ENCODE measurements at regions of chr1 and their contacts with region 1.

Region 1: DNA sequence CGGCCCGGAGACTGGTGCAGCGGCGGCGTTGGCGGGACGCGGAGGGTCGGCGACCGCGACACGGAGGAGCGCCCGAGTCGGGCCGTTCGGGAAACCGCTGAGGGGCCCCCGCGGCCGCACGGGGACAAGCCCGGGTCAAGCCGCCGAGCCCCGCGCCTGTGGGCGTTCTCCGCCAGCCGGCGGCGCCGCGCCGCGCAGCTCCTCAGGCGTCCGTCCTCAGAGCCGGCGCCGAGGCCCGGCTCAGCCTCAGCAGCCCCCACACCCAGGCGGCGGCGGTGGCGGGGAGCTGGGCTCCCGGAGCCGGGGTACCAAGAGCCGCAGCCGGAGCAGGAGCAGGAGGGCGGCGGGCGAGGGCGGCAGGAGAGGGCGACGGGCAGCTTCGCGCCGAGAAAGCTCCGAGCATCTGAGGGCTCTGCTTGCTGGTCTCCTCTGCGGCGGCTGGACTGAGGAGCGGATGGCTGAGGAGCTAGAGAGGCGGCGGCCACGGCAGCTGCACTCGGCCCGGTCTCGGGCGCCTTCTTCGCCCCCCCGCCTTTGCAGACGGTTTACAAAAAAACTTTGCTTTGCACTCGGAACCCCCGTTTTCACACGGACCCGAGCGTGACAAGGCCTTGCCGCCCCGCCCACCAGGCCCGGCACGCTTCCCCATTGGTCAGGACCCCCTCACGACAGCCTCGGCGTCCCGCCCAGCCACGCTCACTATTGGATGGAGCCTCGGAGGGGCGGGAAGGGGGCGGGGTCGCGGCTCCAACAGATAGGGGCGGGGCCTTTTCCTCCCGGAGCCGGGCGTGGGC is at the start of gene SLC30A1:
- DNase-seq: peak; percentile 100
- total RNA-seq, gene SLC30A1: 16.3 TPM

Region 2: DNA sequence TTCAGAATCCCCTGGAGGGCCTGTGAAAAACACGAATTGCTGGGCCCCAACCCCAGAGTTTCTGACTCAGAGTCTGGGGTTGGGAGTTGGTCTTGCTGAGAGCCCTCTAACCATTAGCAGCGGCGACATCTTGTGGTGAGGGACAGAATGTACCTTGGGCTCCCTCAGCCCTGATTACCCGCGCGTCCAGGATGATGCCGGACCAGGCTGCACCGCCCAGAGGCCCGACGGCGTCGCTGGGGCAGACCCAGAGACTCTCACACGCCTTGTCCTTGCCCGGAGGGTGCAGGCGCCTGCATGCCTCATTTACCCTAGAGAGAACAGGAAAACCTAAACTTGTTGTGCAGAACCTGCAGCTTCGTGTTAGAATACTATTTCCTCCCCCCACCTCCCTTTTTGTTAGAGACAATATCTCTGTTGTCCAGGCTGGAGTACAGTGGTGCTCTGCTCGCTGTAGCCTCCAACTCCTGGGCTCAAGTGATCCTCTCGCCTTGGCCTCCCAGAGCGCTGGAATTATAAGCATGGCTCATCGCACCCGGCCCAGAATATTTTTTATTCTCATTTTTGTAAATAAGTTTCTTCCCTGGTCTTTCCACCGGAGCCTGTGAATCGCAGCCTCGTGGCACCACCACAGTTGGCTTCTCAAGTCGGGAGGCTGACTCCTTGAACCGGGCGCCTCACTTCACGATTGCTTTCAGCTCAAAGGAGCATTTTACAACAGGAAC is 64.6 kb before region 1 on chr1:
- intact Hi-C with region 1: loop called (anchors 2 kb)
- DNase-seq: peak; percentile 87

Region 3: GRCh38 chr1:211591980-211592493 is 13.2 kb after region 1 on chr1:
- intact Hi-C with region 1: loop called (anchors 2 kb)
- DNase-seq: no peak

Region 4: GRCh38 chr1:211613093-211613947 is 34.5 kb after region 1 on chr1:
- intact Hi-C with region 1: loop called (anchors 5 kb)
- DNase-seq: peak; percentile 93

Region 5: GRCh38 chr1:211630236-211631081 is 51.6 kb after region 1 on chr1:
- intact Hi-C with region 1: loop called (anchors 1 kb)
- DNase-seq: no peak

Region 6: DNA sequence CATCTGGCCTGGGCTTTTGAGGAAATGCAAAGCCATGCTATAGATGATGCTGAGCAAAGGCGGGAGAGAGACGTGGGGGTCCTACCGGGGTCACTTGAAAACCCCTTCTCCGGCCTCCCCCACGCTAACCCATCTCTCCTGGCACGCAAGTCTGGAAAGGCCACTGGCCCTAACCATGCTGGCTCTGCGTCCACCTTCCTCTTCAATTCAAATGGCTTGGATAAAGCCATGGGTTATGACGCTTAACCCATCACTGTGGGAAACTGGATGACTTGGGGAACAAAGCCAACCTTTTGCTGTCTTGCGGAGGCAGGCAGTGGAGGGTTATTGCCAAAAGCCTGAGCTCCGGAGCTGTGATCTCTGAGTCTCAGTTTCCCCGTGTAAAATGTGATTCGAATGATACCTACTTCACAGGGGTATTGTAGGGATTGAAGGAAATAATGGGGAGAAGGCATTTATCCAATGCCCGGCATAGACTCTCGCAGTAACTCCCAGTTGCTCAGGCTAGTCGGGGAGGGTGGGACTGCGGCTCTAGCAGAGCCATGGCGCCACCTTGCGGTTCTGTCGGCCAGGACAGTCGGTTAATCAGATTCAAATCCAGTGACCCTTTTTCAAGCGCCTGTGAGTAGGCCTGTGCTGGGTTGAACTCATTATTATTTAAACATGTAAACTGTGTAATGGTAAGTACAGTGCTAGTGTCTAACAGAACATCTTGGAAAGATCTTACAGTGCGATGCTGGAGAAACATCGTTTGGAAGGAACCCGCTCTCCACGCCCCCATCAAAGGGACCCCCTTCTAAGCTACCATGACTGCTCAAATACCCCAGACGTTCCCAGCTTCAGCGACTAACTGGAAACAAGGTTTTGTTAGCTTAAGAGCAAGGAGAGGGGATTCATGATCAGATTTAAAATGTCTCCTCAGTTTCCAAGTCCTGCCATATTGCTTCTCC is 76.3 kb after region 1 on chr1:
- intact Hi-C with region 1: loop called (anchors 1 kb)
- DNase-seq: peak; percentile 92

Region 7: DNA sequence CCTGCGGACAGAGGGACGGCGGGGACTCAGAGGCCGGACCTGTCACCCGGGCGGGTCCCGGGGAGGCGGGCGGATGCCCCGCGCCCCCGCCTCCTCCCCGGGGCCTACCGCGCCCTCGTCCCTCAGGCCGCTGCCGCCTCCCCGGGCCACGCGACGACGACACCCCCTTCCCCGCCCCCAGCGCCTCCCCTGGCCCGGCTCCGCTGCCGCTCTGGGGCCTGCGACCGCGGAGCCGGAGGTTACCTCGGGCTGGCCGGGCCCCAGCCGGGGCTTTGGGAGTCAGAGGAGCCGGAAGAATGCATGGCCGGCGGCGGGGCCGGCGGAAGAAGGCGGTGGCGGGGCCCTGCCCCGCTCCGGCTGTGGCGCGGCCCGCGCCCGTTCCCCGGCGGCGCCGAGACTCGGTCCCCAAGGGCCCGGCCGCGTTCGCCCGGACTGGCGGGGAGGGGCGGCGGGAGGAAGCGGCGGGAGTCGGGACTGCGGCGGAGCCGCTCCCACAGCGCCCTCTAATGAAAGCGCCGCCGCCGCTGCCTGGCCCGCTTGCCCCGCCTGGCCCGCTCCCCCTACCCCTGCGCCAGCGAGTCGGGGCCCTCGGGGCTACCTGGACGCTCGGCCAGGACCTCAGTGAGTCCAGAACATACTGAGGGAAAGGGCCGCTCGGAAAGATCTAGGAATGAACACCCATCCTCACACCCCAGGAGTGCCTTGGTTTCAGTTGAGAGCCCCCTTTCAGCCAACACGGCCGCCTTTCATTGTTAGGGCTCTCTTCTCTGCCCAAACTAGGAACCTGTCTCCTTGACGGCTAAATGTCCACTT is 251.7 kb after region 1 on chr1 and contains the start of gene LPGAT1:
- intact Hi-C with region 1: loop called (anchors 2 kb)
- DNase-seq: peak; percentile 95
- total RNA-seq, gene LPGAT1: 43.4 TPM

Measured in cardiac septum (tissue), 1 donor.